HepG2 (cell line): ENCODE measurements at regions of chr15 and their contacts with region 1.

Region 1: GRCh38 chr15:82540055-82540983 is at the start of gene RPS17:
- DNase-seq: peak; percentile 88
- ATAC-seq: peak; percentile 90
- H3K4me3 ChIP-seq: peak within 1 kb of the TSS; percentile 98 to 100 (median 98)
- H3K27ac ChIP-seq: peak within 1 kb of the TSS; percentile 90
- H3K4me1 ChIP-seq: peaks cover 41% of the 10 kb centered on the region
- H3K27me3 ChIP-seq: peaks cover 0 to 10% of the 10 kb centered on the region in 2 experiments; a peak in 1 of 5 replicates
- CTCF ChIP-seq: peak; percentile 98
- EP300 ChIP-seq: peak; percentile 21 to 44; a peak in 1 of 4 replicates
- POLR2A ChIP-seq: peak; percentile 95 to 99
- RAD21 ChIP-seq: peak; percentile 67
- total RNA-seq, gene RPS17: 2,570 and 3,054 TPM in 2 replicates

Region 2: GRCh38 chr15:82647045-82647834 is 106.9 kb after region 1 on chr15 and contains the start of gene CPEB1:
- CTCF ChIA-PET with region 1: no interaction called
- POLR2A ChIA-PET with region 1: no interaction called
- in situ Hi-C with region 1: no loop called
- intact Hi-C with region 1: no loop called
- DNase-seq: no peak
- ATAC-seq: peak; percentile 37
- H3K4me3 ChIP-seq: peak within 1 kb of the TSS; percentile 30 to 43 (median 31); a peak in 4 of 6 replicates
- H3K27ac ChIP-seq: no peak within 1 kb of the TSS
- H3K4me1 ChIP-seq: no peaks in the 10 kb centered on the region
- H3K27me3 ChIP-seq: peaks cover 4 to 35% of the 10 kb centered on the region in 2 experiments; a peak in 4 of 5 replicates
- CTCF ChIP-seq: no peak
- EP300 ChIP-seq: no peak
- POLR2A ChIP-seq: no peak
- RAD21 ChIP-seq: no peak
- total RNA-seq, gene CPEB1: 0.07 TPM in 1 of 2 replicates, not detected in the other

Region 3: DNA sequence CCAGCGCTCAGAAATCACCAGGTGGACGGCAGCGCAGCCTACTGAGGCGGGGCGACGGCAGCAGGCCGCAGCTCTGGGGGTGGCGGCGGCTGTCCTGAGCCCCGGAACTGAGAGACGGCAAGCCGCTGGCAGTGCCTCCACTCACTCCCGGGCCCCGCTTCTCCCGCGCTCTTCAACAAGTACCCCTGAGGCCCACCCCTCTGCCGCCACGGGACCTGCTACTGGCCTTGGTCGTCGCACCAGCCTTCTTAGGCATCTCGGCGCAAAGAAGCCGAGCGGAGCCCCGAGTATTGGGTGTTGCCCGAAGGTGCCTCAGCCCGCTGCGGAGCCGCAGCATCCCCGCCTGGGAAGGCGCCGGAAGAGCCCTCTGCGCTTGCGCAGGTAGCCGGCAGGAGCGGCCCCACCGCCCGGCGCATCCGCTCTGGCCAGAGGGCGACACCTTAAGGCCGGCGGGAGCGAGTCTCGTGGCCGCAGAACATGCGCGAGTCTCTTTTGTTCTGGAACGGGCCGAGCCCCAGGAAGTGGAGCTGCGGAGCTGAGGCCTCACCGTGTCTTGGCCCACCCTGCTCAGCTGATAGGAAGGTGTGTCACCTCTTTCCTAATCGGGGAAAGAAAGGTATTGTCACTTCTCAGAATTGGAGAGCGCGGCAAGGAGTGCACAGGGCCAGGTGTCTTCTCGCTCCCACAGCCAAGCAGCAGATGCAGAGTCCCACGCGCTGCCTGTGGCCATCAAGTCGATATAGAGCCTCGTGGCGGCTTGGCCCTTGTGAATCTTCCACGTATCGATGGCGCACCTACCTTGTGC is 471.2 kb after region 1 on chr15 and contains the start of gene C15orf40:
- CTCF ChIA-PET with region 1: no interaction called
- POLR2A ChIA-PET with region 1: interaction called, 3 read pairs
- in situ Hi-C with region 1: loop called (anchors 10 kb)
- intact Hi-C with region 1: no loop called
- DNase-seq: peak; percentile 81
- ATAC-seq: peak; percentile 96
- H3K4me3 ChIP-seq: peak within 1 kb of the TSS; percentile 63 to 88 (median 66)
- H3K27ac ChIP-seq: peak within 1 kb of the TSS; percentile 63
- H3K4me1 ChIP-seq: peaks cover 33% of the 10 kb centered on the region
- H3K27me3 ChIP-seq: no peaks in the 10 kb centered on the region
- CTCF ChIP-seq: peak; percentile 96
- EP300 ChIP-seq: no peak
- POLR2A ChIP-seq: peak; percentile 77 to 86
- RAD21 ChIP-seq: peak; percentile 61
- total RNA-seq, gene C15orf40: 24.0 and 25.5 TPM in 2 replicates